ENCODE measurements at regions of chr17 and their contacts with region 1.

Region 1: DNA sequence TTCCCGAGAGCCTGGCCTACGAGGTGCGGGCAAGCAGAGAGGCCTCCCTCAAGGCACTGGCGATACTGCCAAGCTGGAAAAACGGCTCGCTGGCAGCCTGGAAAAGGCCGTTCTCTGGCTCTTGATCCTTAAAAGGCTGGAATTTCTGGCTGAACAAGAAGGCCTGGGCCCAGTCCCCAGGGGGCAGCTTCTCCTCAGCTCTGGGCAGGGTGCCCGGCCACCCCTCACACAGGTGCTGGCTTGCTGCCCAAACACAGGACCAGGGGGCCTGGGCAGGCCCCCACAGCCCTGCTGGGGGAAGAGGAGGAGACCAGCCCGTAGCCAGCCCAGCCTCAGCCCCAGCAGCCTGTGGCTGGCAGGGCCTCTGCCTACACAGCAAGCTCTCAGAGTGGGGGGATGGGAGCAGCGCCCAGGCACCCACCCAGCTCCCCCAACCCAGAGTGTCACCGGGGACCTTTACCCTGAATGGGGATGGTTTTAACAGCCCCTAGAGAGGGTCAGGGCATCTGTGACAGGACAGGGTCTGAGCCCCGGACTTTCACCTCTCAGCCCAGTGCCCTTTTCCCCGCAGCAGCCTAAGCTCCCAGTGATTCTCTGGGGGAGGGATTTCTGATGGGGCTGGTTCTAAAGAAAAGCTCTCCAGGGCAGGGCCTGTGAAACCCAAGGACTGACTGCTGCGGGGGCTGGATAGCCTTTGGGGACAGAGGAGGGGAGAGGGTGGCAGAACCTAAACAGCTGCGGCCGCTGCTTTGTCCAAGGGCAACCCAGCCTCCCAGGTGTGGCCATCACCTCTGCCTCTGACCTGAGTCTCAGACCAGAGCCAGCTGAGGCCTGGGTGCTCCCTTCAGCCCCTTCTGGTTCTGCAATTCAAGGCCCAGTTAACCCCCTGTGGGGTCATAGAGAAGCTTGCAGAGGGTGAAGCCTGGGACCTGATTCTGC is 38.6 kb upstream of the TOB1 start:
- DNase-seq: no peak
- H3K4me3 ChIP-seq: no peak overlapping the region
- H3K4me3 Mint-ChIP-seq: peak overlapping the region in 4 of 8 donors; percentile 22 to 79 (median 65)
- H3K27ac ChIP-seq: peak overlapping the region; percentile 66
- H3K27ac Mint-ChIP-seq: peak overlapping the region; percentile 71 to 97 (median 96)
- H3K4me1 ChIP-seq: peaks cover 66% of the 10 kb centered on the region
- H3K4me1 Mint-ChIP-seq: peaks cover 39 to 72% (median 51%) of the 10 kb centered on the region in 4 donors
- H3K27me3 ChIP-seq: no peaks in the 10 kb centered on the region
- H3K27me3 Mint-ChIP-seq: no peaks in the 10 kb centered on the region

Region 2: GRCh38 chr17:50872710-50873424 is 31.9 kb before region 1 on chr17:
- CTCF ChIA-PET with region 1: interaction called, 9 read pairs
- POLR2A ChIA-PET with region 1: interaction called, 688 read pairs
- intact Hi-C with region 1: no loop called
- DNase-seq: peak; percentile 41 to 83 (median 52)
- H3K4me3 ChIP-seq: no peak overlapping the region
- H3K4me3 Mint-ChIP-seq: peak overlapping the region in 6 of 8 donors; percentile 8 to 76 (median 46)
- H3K27ac ChIP-seq: no peak overlapping the region
- H3K27ac Mint-ChIP-seq: peak overlapping the region in 5 of 7 donors; percentile 13 to 92 (median 42)
- H3K4me1 ChIP-seq: peaks cover 53% of the 10 kb centered on the region
- H3K4me1 Mint-ChIP-seq: peaks cover 30 to 53% (median 45%) of the 10 kb centered on the region in 4 donors
- H3K27me3 ChIP-seq: no peaks in the 10 kb centered on the region
- H3K27me3 Mint-ChIP-seq: no peaks in the 10 kb centered on the region

Region 3: GRCh38 chr17:50883850-50884438 is 20.8 kb before region 1 on chr17:
- CTCF ChIA-PET with region 1: interaction called, 4 read pairs
- POLR2A ChIA-PET with region 1: interaction called, 10 read pairs
- intact Hi-C with region 1: no loop called
- DNase-seq: no peak
- H3K4me3 ChIP-seq: no peak overlapping the region
- H3K4me3 Mint-ChIP-seq: peak overlapping the region in 1 of 8 donors; percentile 25
- H3K27ac ChIP-seq: no peak overlapping the region
- H3K27ac Mint-ChIP-seq: peak overlapping the region in 5 of 7 donors; percentile 14 to 88 (median 71)
- H3K4me1 ChIP-seq: peaks cover 27% of the 10 kb centered on the region
- H3K4me1 Mint-ChIP-seq: peaks cover 26 to 44% (median 31%) of the 10 kb centered on the region in 4 donors
- H3K27me3 ChIP-seq: no peaks in the 10 kb centered on the region
- H3K27me3 Mint-ChIP-seq: no peaks in the 10 kb centered on the region

Region 4: GRCh38 chr17:50919321-50920085 is 14.7 kb after region 1 on chr17:
- CTCF ChIA-PET with region 1: interaction called, 5 read pairs
- POLR2A ChIA-PET with region 1: interaction called, 10 read pairs
- intact Hi-C with region 1: no loop called
- DNase-seq: peak; percentile 86 to 97 (median 92)
- H3K4me3 ChIP-seq: peak overlapping the region; percentile 14 to 27
- H3K4me3 Mint-ChIP-seq: peak overlapping the region; percentile 50 to 89 (median 75)
- H3K27ac ChIP-seq: peak overlapping the region; percentile 75
- H3K27ac Mint-ChIP-seq: peak overlapping the region; percentile 97 to 99 (median 99)
- H3K4me1 ChIP-seq: peaks cover 39% of the 10 kb centered on the region
- H3K4me1 Mint-ChIP-seq: peaks cover 15 to 56% (median 38%) of the 10 kb centered on the region in 4 donors
- H3K27me3 ChIP-seq: no peaks in the 10 kb centered on the region
- H3K27me3 Mint-ChIP-seq: no peaks in the 10 kb centered on the region

Region 5: DNA sequence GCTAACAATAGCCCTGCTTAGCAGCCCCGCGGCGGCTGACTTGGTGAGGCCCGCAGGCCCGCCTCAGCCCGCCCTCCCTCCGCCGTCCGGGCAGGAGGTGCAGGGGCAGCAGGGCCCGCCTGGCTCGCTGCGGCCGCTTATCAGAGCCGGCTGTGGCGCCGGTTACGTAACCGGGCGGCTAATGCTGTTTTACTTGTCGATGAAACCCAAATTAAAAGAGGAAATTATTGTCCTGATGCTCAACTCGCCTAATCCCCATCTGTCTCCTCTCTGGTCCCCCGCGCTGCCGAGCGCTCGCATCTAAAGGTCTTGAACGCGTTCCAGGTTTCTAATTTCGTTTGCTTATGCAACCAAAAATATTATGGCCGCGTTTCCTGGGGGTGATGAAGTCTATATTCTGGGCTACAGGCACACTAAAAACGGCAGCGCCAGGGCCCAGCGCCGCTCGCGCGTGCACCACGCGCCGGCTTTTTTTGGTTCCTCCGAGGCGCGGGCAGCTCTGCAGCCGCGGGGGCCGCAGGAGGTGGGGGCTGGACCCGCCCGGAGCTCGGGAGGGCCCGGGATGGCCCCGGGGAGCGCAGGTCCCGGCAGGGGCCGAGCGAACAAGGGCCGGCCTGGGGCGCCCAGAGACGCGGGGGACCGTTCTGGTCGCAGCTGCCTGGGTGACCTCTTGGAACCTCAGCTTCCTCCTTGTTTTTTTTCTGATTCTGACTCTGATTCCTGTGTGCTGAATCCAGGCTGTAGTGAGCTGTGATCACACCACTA is 26.5 kb after region 1 on chr17:
- CTCF ChIA-PET with region 1: interaction called, 6 read pairs
- POLR2A ChIA-PET with region 1: interaction called, 28 read pairs
- intact Hi-C with region 1: no loop called
- DNase-seq: peak; percentile 57 to 68 (median 61)
- H3K4me3 ChIP-seq: peak overlapping the region in 1 of 2 donors; percentile 45
- H3K4me3 Mint-ChIP-seq: peak overlapping the region; percentile 86 to 95 (median 88)
- H3K27ac ChIP-seq: peak overlapping the region; percentile 49
- H3K27ac Mint-ChIP-seq: peak overlapping the region; percentile 75 to 99 (median 96)
- H3K4me1 ChIP-seq: peaks cover 35% of the 10 kb centered on the region
- H3K4me1 Mint-ChIP-seq: peaks cover 14 to 63% (median 36%) of the 10 kb centered on the region in 4 donors
- H3K27me3 ChIP-seq: no peaks in the 10 kb centered on the region
- H3K27me3 Mint-ChIP-seq: no peaks in the 10 kb centered on the region

Region 6: GRCh38 chr17:50944054-50944901 is 39.5 kb after region 1 on chr17:
- CTCF ChIA-PET with region 1: interaction called, 10 read pairs
- POLR2A ChIA-PET with region 1: interaction called, 14 read pairs
- intact Hi-C with region 1: loop called (anchors 5 kb)
- DNase-seq: peak; percentile 73 to 82 (median 76)
- H3K4me3 ChIP-seq: peak overlapping the region; percentile 46 to 49
- H3K4me3 Mint-ChIP-seq: peak overlapping the region; percentile 79 to 88 (median 84)
- H3K27ac ChIP-seq: peak overlapping the region; percentile 73
- H3K27ac Mint-ChIP-seq: peak overlapping the region; percentile 87 to 94 (median 93)
- H3K4me1 ChIP-seq: peaks cover 40% of the 10 kb centered on the region
- H3K4me1 Mint-ChIP-seq: peaks cover 21 to 52% (median 36%) of the 10 kb centered on the region in 4 donors
- H3K27me3 ChIP-seq: no peaks in the 10 kb centered on the region
- H3K27me3 Mint-ChIP-seq: no peaks in the 10 kb centered on the region

Region 7: DNA sequence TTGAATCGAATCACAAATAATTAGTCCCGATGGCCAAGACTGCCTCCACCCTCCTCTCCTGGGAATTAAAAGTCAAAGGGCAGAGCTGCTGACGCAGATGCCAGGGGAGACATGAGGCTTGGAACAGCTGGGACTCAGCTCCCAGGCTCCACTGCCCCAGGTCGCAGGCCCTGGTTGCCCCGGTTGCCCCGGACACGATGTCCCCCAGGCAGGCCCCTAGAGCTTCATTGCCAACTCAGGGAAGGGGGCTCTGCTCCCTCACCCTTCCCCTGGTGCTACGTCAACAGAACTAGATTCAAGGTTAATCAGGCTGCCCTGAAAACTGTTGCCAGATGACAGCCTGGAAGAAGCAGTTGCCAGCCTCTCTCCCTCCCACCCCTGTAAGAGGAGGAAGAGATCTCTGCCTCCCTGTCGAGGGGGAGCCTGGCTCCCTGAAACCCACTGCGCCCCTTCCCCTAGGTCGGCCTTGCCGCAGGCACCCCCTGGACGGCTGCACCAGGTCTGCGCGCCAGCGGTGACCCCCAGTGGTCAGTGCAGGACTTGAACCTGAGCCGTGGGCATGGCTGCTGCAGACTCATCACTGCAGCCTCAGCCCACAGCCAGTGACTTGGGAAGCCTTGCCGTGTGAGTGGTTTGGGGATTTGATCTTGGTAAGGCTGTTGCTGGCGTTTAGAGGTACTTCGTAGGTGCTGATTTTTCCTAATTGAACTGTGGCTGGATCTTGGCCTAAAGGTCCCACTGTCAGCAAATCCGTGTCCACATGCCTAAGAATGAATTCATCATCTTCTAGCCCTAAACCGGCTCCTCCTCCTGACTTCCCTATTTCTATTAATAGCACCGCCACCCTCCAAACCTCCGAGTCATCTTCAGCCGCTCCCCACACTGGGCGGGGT is 45.4 kb after region 1 on chr17:
- CTCF ChIA-PET with region 1: interaction called, 10 read pairs
- POLR2A ChIA-PET with region 1: interaction called, 14 read pairs
- intact Hi-C with region 1: no loop called
- DNase-seq: peak in 4 of 5 donors; percentile 39 to 66 (median 44)
- H3K4me3 ChIP-seq: no peak overlapping the region
- H3K4me3 Mint-ChIP-seq: peak overlapping the region in 2 of 8 donors; percentile 25 to 35
- H3K27ac ChIP-seq: no peak overlapping the region
- H3K27ac Mint-ChIP-seq: peak overlapping the region in 4 of 7 donors; percentile 39 to 72 (median 58)
- H3K4me1 ChIP-seq: peaks cover 20% of the 10 kb centered on the region
- H3K4me1 Mint-ChIP-seq: peaks cover 16 to 39% (median 25%) of the 10 kb centered on the region in 4 donors
- H3K27me3 ChIP-seq: no peaks in the 10 kb centered on the region
- H3K27me3 Mint-ChIP-seq: peaks cover 0 to 2% of the 10 kb centered on the region in 2 donors